HCT116 (cell line): ENCODE measurements at regions of chr14 and their contacts with region 1.

Region 1: DNA sequence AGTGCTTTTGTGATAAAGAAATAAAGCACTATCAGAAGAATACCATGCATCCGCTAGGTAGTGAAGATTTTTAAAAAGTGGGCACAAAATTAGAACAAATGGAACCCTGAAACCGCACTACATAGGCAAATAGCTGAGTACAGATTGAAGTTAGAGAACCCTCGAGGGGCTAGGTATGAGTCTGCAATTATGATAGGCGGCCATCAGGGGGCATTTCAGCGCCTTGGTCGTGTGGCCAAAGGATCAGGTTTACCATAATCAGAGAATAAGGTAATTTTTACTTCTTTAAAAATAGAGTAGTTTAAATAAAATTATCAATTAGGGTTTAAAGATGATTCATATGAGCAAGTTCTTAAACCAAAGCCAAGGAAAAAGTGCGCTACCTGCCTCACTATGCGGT is 129.8 kb downstream of the TMX1 start:
- DNase-seq: peak; percentile 18
- ATAC-seq: peak; percentile 79
- H3K4me3 ChIP-seq: no peak overlapping the region
- H3K27ac ChIP-seq: no peak overlapping the region
- H3K4me1 ChIP-seq: no peaks in the 10 kb centered on the region
- H3K27me3 ChIP-seq: no peaks in the 10 kb centered on the region
- CTCF ChIP-seq: peak; percentile 65 to 72 (median 70)
- POLR2A ChIP-seq: no peak
- RAD21 ChIP-seq: peak; percentile 78

Region 2: GRCh38 chr14:51651388-51652167 is 281.8 kb after region 1 on chr14 and contains the start of gene FRMD6:
- CTCF ChIA-PET with region 1: no interaction called
- POLR2A ChIA-PET with region 1: no interaction called
- RAD21 ChIA-PET with region 1: interaction called in 1 of 2 experiments, 3 read pairs
- intact Hi-C with region 1: loop called (anchors 2 kb)
- DNase-seq: peak; percentile 68
- ATAC-seq: peak; percentile 82
- H3K4me3 ChIP-seq: peak within 1 kb of the TSS; percentile 84 to 91
- H3K27ac ChIP-seq: peak within 1 kb of the TSS; percentile 89
- H3K4me1 ChIP-seq: peaks cover 13 to 28% of the 10 kb centered on the region in 2 experiments
- H3K27me3 ChIP-seq: no peaks in the 10 kb centered on the region
- CTCF ChIP-seq: peak; percentile 34 to 79 (median 64)
- POLR2A ChIP-seq: peak; percentile 25
- RAD21 ChIP-seq: peak; percentile 48
- total RNA-seq, gene FRMD6: 11.4 TPM

Region 3: DNA sequence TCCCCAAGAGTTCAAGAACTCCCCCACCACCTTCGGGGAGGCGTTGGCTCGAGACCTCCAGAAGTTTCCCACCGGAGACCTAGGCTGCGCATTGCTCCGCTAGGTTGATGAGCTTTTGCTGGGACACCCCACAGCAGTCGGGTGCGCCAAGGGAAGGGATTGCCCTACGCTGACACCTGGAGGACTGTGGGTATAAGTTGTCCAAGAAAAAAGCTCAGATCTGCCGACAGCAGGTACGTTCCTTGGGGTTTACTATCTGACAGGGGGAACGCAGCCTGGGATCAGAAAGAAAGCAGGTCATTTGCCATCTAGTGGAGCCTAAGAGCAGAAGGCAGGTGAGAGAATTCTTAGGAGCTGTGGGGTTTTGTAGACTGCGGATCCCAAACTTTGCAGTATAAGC is 380.7 kb after region 1 on chr14:
- CTCF ChIA-PET with region 1: interaction called, 11 read pairs
- POLR2A ChIA-PET with region 1: no interaction called
- RAD21 ChIA-PET with region 1: interaction called in 1 of 2 experiments, 5 read pairs
- intact Hi-C with region 1: no loop called
- DNase-seq: peak; percentile 19
- ATAC-seq: no peak
- H3K4me3 ChIP-seq: no peak overlapping the region
- H3K27ac ChIP-seq: no peak overlapping the region
- H3K4me1 ChIP-seq: peaks cover 0 to 9% of the 10 kb centered on the region in 2 experiments; a peak in 1 of 4 replicates
- H3K27me3 ChIP-seq: no peaks in the 10 kb centered on the region
- CTCF ChIP-seq: peak; percentile 17 to 27 (median 25); a peak in 4 of 6 replicates
- POLR2A ChIP-seq: no peak
- RAD21 ChIP-seq: peak; percentile 53

Region 4: GRCh38 chr14:52563120-52563519 is 1193.3 kb after region 1 on chr14:
- CTCF ChIA-PET with region 1: no interaction called
- POLR2A ChIA-PET with region 1: no interaction called
- RAD21 ChIA-PET with region 1: no interaction called
- intact Hi-C with region 1: no loop called
- DNase-seq: no peak
- ATAC-seq: peak; percentile 53; the same call in 1 of the 2 replicates
- H3K4me3 ChIP-seq: no peak overlapping the region
- H3K27ac ChIP-seq: no peak overlapping the region
- H3K4me1 ChIP-seq: peaks cover 0 to 8% of the 10 kb centered on the region in 2 experiments; a peak in 2 of 4 replicates
- H3K27me3 ChIP-seq: no peaks in the 10 kb centered on the region
- CTCF ChIP-seq: no peak
- POLR2A ChIP-seq: no peak
- RAD21 ChIP-seq: no peak